Activated naive CD8-positive, alpha-beta T cell treated with anti-CD3 and anti-CD28 coated beads, Interleukin-2, amount 10 ng/mL, durations not matched to agents 7 days and 5 days (primary cell): ENCODE measurements at regions of chr14 and their contacts with region 1.

Region 1: DNA sequence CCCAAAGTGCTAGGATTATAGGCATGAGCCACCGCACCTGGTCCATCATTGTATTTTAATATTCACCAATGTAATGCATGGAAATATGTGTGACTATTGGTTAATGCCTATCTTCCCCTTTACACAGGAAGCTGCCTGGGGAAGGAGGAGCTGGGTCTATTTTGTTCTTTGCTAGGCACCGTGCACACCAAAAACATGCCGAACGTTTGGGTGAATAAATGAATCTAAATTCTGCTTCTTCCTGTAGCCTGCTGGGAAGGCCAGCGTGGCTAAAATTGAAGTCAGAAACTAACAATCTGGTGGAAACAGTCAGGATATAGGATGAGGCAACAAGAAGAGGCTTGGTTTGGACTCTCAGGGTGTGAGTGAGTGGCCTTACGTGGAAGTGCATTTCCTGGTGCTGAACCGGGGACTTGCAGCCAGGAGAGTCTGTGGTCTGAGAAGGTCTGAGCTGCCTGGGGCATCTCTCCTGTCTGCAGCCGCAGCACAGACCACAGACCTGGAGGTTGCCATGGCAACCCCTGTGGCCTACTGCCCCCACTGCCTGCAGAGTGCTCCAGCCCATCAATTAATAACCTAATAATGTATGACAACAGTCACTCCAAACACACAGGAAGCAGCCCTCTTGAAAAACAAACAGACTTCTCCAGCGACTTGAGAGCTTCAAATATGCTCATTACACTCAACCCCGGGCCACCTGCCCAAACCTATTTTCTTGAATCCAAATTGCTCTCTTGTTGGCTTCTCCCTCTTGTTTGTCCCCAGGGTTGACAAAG is 5.5 kb upstream of the GPR68 start:
- DNase-seq: peak; percentile 78
- ATAC-seq: peak; percentile 34
- H3K4me3 Mint-ChIP-seq: peak overlapping the region; percentile 78
- H3K27ac Mint-ChIP-seq: peak overlapping the region; percentile 97
- H3K4me1 Mint-ChIP-seq: peaks cover 72% of the 10 kb centered on the region
- H3K27me3 Mint-ChIP-seq: no peaks in the 10 kb centered on the region

Region 2: GRCh38 chr14:91264151-91265150 is 14.4 kb after region 1 on chr14:
- POLR2A ChIA-PET with region 1: interaction called, 232 read pairs
- DNase-seq: peak; percentile 74
- ATAC-seq: peak; percentile 59
- H3K4me3 Mint-ChIP-seq: peak overlapping the region; percentile 80
- H3K27ac Mint-ChIP-seq: peak overlapping the region; percentile 70
- H3K4me1 Mint-ChIP-seq: peaks cover 51% of the 10 kb centered on the region
- H3K27me3 Mint-ChIP-seq: no peaks in the 10 kb centered on the region